MCF 10A (cell line): ENCODE measurements at regions of chr11 and their contacts with region 1.

Region 1: GRCh38 chr11:69642913-69643632 is 2.1 kb downstream of the CCND1 start:
- DNase-seq: peak; percentile 78
- H3K4me3 Mint-ChIP-seq: peak overlapping the region; percentile 98
- H3K27ac Mint-ChIP-seq: no peak overlapping the region
- H3K4me1 Mint-ChIP-seq: peaks cover 8% of the 10 kb centered on the region
- H3K27me3 Mint-ChIP-seq: no peaks in the 10 kb centered on the region
- CTCF ChIP-seq: peak; percentile 97

Region 2: DNA sequence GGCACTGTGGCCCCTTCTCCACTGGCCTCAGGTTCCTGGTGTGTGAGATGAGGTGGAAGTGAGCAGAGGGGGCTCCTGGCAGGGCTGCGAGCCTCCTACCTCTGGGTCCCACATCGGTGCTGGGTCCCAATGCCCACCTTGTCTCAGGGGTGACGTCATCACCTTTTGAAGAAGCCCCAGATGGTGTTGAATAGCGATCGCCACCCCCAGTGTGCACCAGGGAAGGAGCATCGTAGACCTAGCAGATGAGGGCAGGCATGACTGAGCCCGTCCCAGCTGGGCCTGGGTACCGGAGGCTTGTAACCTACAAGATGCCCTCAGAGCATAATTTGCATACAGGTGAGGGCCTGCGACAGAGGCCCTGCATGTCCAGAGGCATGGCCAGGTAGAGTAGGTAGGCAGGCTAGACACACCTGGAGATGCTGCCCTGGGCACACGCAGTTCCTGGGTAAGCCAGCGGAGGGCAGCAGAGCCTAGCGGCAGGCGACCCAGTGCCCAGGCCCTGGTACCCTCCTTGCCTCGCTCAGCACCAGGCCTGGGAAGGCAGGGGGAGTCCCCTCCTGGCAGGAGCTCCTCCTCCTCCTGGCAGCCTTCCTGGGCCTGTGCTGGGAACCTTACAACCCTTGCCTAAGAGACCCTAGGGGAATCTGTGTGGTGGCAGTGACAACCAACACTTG is 541.8 kb before region 1 on chr11:
- CTCF ChIA-PET with region 1: interaction called, 87 read pairs
- POLR2A ChIA-PET with region 1: interaction called, 32 read pairs
- intact Hi-C with region 1: loop called (anchors 1 kb)
- DNase-seq: peak; percentile 94
- H3K4me3 Mint-ChIP-seq: no peak overlapping the region
- H3K27ac Mint-ChIP-seq: peak overlapping the region; percentile 42
- H3K4me1 Mint-ChIP-seq: peaks cover 6% of the 10 kb centered on the region
- H3K27me3 Mint-ChIP-seq: no peaks in the 10 kb centered on the region
- CTCF ChIP-seq: peak; percentile 100

Region 3: DNA sequence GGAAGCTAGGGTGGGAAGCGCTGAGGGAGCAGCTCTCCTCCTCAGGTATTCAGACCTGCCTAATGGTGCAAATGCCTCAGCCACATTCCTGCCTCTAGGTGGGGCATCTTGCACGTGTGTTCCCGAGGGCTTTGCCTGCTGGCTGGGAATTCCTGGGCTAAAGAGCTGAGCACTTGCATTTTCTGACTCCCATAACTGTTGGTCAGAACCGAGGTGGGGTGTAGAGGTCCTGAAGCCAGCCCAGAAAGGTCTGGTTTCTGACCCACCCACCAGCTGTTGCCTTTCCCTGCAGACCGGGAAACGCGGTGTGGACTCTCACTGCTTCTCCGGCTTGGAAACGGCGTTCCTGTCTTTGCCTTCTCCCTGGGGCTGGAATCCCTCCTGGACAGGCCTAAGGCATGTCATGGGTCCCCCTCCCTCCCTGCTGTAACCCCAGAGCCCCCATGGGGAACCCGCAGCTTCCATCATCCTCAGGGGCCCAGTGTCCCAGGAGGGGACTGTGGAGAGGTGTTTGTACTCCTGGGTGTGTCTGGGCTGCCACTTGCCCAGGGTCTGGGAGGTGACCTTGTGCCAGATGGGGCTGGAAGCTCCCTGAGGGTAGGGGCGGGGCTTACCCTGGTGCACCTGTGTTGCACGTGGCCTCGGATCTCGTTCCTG is 511.3 kb before region 1 on chr11:
- CTCF ChIA-PET with region 1: interaction called, 27 read pairs
- POLR2A ChIA-PET with region 1: interaction called, 9 read pairs
- intact Hi-C with region 1: loop called (anchors 2 kb)
- DNase-seq: peak; percentile 84
- H3K4me3 Mint-ChIP-seq: no peak overlapping the region
- H3K27ac Mint-ChIP-seq: no peak overlapping the region
- H3K4me1 Mint-ChIP-seq: no peaks in the 10 kb centered on the region
- H3K27me3 Mint-ChIP-seq: no peaks in the 10 kb centered on the region
- CTCF ChIP-seq: peak; percentile 96

Region 4: DNA sequence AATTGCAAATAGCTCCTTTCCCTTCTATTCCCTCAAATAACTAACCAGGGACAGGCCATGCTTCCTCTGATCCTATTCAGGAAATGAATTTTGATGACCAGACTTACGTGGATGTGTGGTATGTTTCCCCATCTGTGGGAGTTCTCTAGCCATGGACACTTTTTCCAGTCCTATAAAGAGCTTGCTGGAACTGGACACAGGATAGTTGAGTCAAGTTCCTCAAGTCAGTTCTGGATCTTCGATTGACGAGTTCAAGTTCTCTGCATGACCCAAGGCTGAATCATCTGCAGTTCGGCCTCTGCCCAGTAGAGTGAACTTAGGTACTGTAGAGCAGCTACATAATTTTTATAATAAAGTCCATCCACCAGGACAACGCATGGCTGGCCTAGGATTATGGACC is 54.8 kb before region 1 on chr11:
- CTCF ChIA-PET with region 1: no interaction called
- POLR2A ChIA-PET with region 1: no interaction called
- intact Hi-C with region 1: loop called (anchors 2 kb)
- DNase-seq: peak; percentile 61
- H3K4me3 Mint-ChIP-seq: no peak overlapping the region
- H3K27ac Mint-ChIP-seq: peak overlapping the region; percentile 78
- H3K4me1 Mint-ChIP-seq: peaks cover 18% of the 10 kb centered on the region
- H3K27me3 Mint-ChIP-seq: no peaks in the 10 kb centered on the region
- CTCF ChIP-seq: peak; percentile 39